Naive thymus-derived CD4-positive, alpha-beta T cell (primary cell): ENCODE measurements at regions of chr1 and their contacts with region 1.

Region 1: GRCh38 chr1:155001675-155002463 is 733 bp upstream of the ZBTB7B start:
- DNase-seq: peak; percentile 90 to 98 (median 95)
- ATAC-seq: peak; percentile 87
- H3K4me3 ChIP-seq: peak overlapping the region; percentile 95
- H3K4me3 Mint-ChIP-seq: peak overlapping the region; percentile 90 to 100 (median 95)
- H3K27ac ChIP-seq: peak overlapping the region; percentile 88
- H3K27ac Mint-ChIP-seq: peak overlapping the region; percentile 70 to 99 (median 91)
- H3K4me1 ChIP-seq: peaks cover 23 to 40% of the 10 kb centered on the region in 2 donors
- H3K4me1 Mint-ChIP-seq: peaks cover 29 to 63% (median 55%) of the 10 kb centered on the region in 7 donors
- H3K27me3 ChIP-seq: no peaks in the 10 kb centered on the region
- H3K27me3 Mint-ChIP-seq: no peaks in the 10 kb centered on the region

Region 2: GRCh38 chr1:154863315-154864174 is 138.3 kb before region 1 on chr1:
- CTCF ChIA-PET with region 1: no interaction called
- POLR2A ChIA-PET with region 1: no interaction called
- intact Hi-C with region 1: no loop called
- DNase-seq: no peak
- ATAC-seq: peak; percentile 48
- H3K4me3 ChIP-seq: no peak overlapping the region
- H3K4me3 Mint-ChIP-seq: no peak overlapping the region
- H3K27ac ChIP-seq: no peak overlapping the region
- H3K27ac Mint-ChIP-seq: no peak overlapping the region
- H3K4me1 ChIP-seq: no peaks in the 10 kb centered on the region
- H3K4me1 Mint-ChIP-seq: peaks cover 0 to 7% (median 4%) of the 10 kb centered on the region in 7 donors
- H3K27me3 ChIP-seq: no peaks in the 10 kb centered on the region
- H3K27me3 Mint-ChIP-seq: peaks cover 6 to 42% (median 13%) of the 10 kb centered on the region in 5 donors

Region 3: GRCh38 chr1:154955718-154956543 is 45.9 kb before region 1 on chr1 and contains the start of gene PBXIP1:
- CTCF ChIA-PET with region 1: interaction called, 12 read pairs
- POLR2A ChIA-PET with region 1: interaction called, 21 read pairs
- intact Hi-C with region 1: loop called (anchors 1 kb)
- DNase-seq: peak; percentile 56 to 95 (median 92)
- ATAC-seq: peak; percentile 58
- H3K4me3 ChIP-seq: peak within 1 kb of the TSS; percentile 92
- H3K4me3 Mint-ChIP-seq: peak within 1 kb of the TSS; percentile 92 to 99 (median 98)
- H3K27ac ChIP-seq: peak within 1 kb of the TSS; percentile 96
- H3K27ac Mint-ChIP-seq: peak within 1 kb of the TSS; percentile 97 to 100 (median 99)
- H3K4me1 ChIP-seq: peaks cover 53 to 54% of the 10 kb centered on the region in 2 donors
- H3K4me1 Mint-ChIP-seq: peaks cover 59 to 87% (median 76%) of the 10 kb centered on the region in 7 donors
- H3K27me3 ChIP-seq: no peaks in the 10 kb centered on the region
- H3K27me3 Mint-ChIP-seq: no peaks in the 10 kb centered on the region
- total RNA-seq, gene PBXIP1: 107 to 390 (median 383) TPM

Region 4: DNA sequence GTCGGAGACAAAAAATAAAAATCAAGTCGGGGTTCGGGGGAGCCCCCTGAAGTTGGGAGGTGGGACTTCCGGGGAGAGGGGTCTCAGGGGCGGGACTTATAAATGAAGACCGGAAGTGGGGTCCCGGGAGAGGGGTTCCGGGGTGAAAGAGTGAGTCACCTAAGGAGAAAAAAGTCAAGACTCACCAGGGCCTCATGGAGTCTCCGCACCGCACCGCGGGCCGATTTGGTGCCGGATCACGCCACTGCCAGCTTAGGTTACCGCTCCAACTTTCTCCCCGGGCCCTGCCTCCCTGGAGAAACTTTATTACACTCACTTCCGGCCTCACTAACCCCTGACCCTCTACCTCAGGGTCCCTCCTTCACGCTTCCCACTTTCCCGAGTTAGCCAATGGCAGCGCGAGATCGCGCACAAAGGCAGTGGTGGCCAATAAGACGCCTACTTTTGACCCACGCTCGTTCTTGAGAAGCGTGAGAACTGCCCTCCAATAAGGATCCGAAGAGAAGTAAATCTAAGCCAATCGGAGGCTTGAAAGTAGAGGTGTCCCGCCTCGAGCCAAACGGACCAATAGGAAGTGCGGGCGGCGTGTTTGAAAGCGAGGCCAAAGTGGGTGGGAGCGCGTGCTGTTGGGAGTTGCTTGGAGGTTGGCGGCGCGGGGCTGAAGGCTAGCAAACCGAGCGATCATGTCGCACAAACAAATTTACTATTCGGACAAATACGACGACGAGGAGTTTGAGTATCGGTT is 27.6 kb before region 1 on chr1 and contains the start of gene CKS1B:
- CTCF ChIA-PET with region 1: interaction called, 6 read pairs
- POLR2A ChIA-PET with region 1: interaction called, 23 read pairs
- intact Hi-C with region 1: loop called (anchors 1 kb)
- DNase-seq: peak; percentile 86 to 100 (median 98)
- ATAC-seq: peak; percentile 89
- H3K4me3 ChIP-seq: peak within 1 kb of the TSS; percentile 82
- H3K4me3 Mint-ChIP-seq: no peak within 1 kb of the TSS
- H3K27ac ChIP-seq: peak within 1 kb of the TSS; percentile 94
- H3K27ac Mint-ChIP-seq: no peak within 1 kb of the TSS
- H3K4me1 ChIP-seq: peaks cover 28 to 35% of the 10 kb centered on the region in 2 donors
- H3K4me1 Mint-ChIP-seq: peaks cover 27 to 39% (median 31%) of the 10 kb centered on the region in 7 donors
- H3K27me3 ChIP-seq: no peaks in the 10 kb centered on the region
- H3K27me3 Mint-ChIP-seq: no peaks in the 10 kb centered on the region
- total RNA-seq, gene CKS1B: 8.4 to 105 (median 10.2) TPM

Region 5: DNA sequence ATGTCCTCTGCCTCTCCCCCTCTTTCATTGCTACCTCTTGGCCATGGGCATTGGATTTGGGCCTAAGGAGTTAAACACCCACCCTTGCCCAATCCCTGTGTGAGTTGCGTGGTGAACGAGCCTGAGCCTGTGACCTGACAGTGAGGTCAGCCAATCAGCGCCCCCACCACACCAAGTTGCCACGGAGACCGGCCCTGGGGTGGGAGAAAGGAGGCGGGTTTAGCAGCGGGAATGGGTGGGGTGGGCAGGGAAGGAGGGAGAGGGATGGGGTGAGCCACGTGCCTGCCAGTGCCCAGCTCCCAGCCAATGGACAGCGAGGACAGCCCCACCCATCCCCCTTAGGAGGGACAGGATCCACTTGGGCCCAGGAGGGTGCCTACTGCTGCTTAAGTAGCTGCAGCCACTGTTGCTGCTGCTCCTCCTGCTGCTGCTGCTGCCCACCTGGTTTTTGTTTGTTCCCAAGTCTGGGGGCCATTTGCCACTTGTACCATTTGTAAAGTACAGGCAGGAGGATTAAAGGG is 10.2 kb after region 1 on chr1:
- CTCF ChIA-PET with region 1: interaction called, 291 read pairs
- POLR2A ChIA-PET with region 1: interaction called, 270 read pairs
- intact Hi-C with region 1: loop called (anchors 1 kb)
- DNase-seq: peak in 1 of 9 donors; percentile 56
- ATAC-seq: peak; percentile 7
- H3K4me3 ChIP-seq: peak overlapping the region; percentile 38
- H3K4me3 Mint-ChIP-seq: peak overlapping the region; percentile 75 to 99 (median 90)
- H3K27ac ChIP-seq: peak overlapping the region; percentile 83
- H3K27ac Mint-ChIP-seq: peak overlapping the region; percentile 80 to 98 (median 95)
- H3K4me1 ChIP-seq: peaks cover 56 to 71% of the 10 kb centered on the region in 2 donors
- H3K4me1 Mint-ChIP-seq: peaks cover 30 to 78% (median 63%) of the 10 kb centered on the region in 7 donors
- H3K27me3 ChIP-seq: no peaks in the 10 kb centered on the region
- H3K27me3 Mint-ChIP-seq: no peaks in the 10 kb centered on the region

Region 6: GRCh38 chr1:155050560-155051341 is 48.9 kb after region 1 on chr1 and contains the start of gene ADAM15:
- CTCF ChIA-PET with region 1: no interaction called
- POLR2A ChIA-PET with region 1: no interaction called
- intact Hi-C with region 1: loop called in 1 of 2 experiments (anchors 1 kb)
- DNase-seq: peak; percentile 56 to 88 (median 74)
- ATAC-seq: peak; percentile 90
- H3K4me3 ChIP-seq: peak within 1 kb of the TSS; percentile 66
- H3K4me3 Mint-ChIP-seq: peak within 1 kb of the TSS; percentile 74 to 91 (median 88)
- H3K27ac ChIP-seq: peak within 1 kb of the TSS; percentile 72
- H3K27ac Mint-ChIP-seq: peak within 1 kb of the TSS in 8 of 9 donors; percentile 47 to 85 (median 70)
- H3K4me1 ChIP-seq: peaks cover 5 to 13% of the 10 kb centered on the region in 2 donors
- H3K4me1 Mint-ChIP-seq: peaks cover 14 to 31% (median 23%) of the 10 kb centered on the region in 7 donors
- H3K27me3 ChIP-seq: no peaks in the 10 kb centered on the region
- H3K27me3 Mint-ChIP-seq: no peaks in the 10 kb centered on the region
- total RNA-seq, gene ADAM15: 16.9 to 53.7 (median 28.8) TPM

Region 7: DNA sequence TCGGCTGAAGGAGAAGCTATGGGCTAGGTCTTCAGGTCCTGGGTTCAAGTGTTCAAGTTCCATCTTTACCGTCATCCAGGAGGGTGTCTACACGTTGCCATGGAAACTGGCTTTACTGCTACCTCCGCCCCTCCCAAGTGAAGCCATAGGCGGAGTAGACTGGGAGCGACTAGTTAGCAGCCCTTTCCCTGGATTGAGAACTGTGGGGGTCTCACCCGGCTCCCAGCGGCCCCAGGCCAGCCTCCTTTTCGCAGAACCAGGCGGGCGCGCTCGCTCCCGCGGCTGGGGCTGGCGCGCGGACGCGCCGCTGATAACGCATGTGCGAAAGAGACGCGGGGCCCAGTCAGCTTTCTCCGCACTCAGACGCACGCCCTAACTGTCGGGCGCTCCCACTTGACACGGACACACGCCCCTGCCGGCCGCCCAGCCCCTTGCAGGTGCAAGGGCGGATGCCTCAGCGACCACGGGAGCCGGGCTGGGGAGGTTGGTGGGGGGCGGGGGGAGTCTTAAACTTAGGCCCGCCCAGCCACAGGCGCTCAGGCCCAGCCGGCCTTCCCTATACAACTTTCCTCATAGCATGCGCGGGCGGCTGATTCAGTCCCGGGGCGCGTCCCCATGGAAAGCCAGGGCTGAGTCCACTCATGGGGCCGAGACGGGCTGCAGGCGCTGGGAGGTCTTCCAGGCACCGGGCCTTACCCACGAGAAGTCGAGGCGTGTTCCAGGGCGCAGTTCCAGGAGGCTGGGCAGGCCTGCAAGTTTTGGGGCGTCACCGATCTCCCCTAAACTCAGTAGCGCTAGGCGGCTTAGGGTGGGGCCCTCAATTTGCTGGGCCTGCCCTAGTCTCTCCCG is 69.1 kb after region 1 on chr1:
- CTCF ChIA-PET with region 1: no interaction called
- POLR2A ChIA-PET with region 1: no interaction called
- intact Hi-C with region 1: no loop called
- DNase-seq: peak; percentile 64 to 85 (median 79)
- ATAC-seq: peak; percentile 98
- H3K4me3 ChIP-seq: peak overlapping the region; percentile 56
- H3K4me3 Mint-ChIP-seq: peak overlapping the region; percentile 53 to 77 (median 58)
- H3K27ac ChIP-seq: peak overlapping the region; percentile 66
- H3K27ac Mint-ChIP-seq: peak overlapping the region in 7 of 9 donors; percentile 43 to 86 (median 64)
- H3K4me1 ChIP-seq: peaks cover 6 to 16% of the 10 kb centered on the region in 2 donors
- H3K4me1 Mint-ChIP-seq: peaks cover 17 to 50% (median 42%) of the 10 kb centered on the region in 7 donors
- H3K27me3 ChIP-seq: no peaks in the 10 kb centered on the region
- H3K27me3 Mint-ChIP-seq: peaks cover 0 to 9% (median 0%) of the 10 kb centered on the region in 5 donors

Region 8: GRCh38 chr1:155172732-155173477 is 171.0 kb after region 1 on chr1 and contains the start of gene KRTCAP2:
- CTCF ChIA-PET with region 1: no interaction called
- POLR2A ChIA-PET with region 1: no interaction called
- intact Hi-C with region 1: loop called in 1 of 2 experiments (anchors 1 kb)
- DNase-seq: peak; percentile 89 to 93 (median 92)
- ATAC-seq: peak; percentile 91
- H3K4me3 ChIP-seq: peak within 1 kb of the TSS; percentile 90
- H3K4me3 Mint-ChIP-seq: peak within 1 kb of the TSS; percentile 94 to 100 (median 98)
- H3K27ac ChIP-seq: peak within 1 kb of the TSS; percentile 88
- H3K27ac Mint-ChIP-seq: peak within 1 kb of the TSS; percentile 95 to 99 (median 98)
- H3K4me1 ChIP-seq: peaks cover 11 to 18% of the 10 kb centered on the region in 2 donors
- H3K4me1 Mint-ChIP-seq: peaks cover 32 to 60% (median 47%) of the 10 kb centered on the region in 7 donors
- H3K27me3 ChIP-seq: no peaks in the 10 kb centered on the region
- H3K27me3 Mint-ChIP-seq: peaks cover 0 to 6% (median 0%) of the 10 kb centered on the region in 5 donors
- total RNA-seq, gene KRTCAP2: 97.4 to 236 (median 155) TPM